Panc1 (cell line): ENCODE measurements at regions of chr2 and their contacts with region 1.

Region 1: GRCh38 chr2:46887028-46887885 is 28.3 kb downstream of the MCFD2 start:
- DNase-seq: no peak
- ATAC-seq: no peak
- H3K4me3 ChIP-seq: no peak overlapping the region
- H3K27ac ChIP-seq: no peak overlapping the region
- H3K4me1 ChIP-seq: peaks cover 2% of the 10 kb centered on the region; the same call in 1 of the 2 replicates
- H3K27me3 ChIP-seq: no peaks in the 10 kb centered on the region
- CTCF ChIP-seq: no peak

Region 2: GRCh38 chr2:46632349-46632748 is 254.9 kb before region 1 on chr2:
- CTCF ChIA-PET with region 1: no interaction called
- POLR2A ChIA-PET with region 1: no interaction called
- in situ Hi-C with region 1: no loop called
- intact Hi-C with region 1: loop called (anchors 2 kb)
- DNase-seq: no peak
- ATAC-seq: peak; percentile 73
- H3K4me3 ChIP-seq: no peak overlapping the region
- H3K27ac ChIP-seq: no peak overlapping the region
- H3K4me1 ChIP-seq: no peaks in the 10 kb centered on the region
- H3K27me3 ChIP-seq: no peaks in the 10 kb centered on the region
- CTCF ChIP-seq: peak; percentile 66; the same call in 1 of the 2 replicates

Region 3: DNA sequence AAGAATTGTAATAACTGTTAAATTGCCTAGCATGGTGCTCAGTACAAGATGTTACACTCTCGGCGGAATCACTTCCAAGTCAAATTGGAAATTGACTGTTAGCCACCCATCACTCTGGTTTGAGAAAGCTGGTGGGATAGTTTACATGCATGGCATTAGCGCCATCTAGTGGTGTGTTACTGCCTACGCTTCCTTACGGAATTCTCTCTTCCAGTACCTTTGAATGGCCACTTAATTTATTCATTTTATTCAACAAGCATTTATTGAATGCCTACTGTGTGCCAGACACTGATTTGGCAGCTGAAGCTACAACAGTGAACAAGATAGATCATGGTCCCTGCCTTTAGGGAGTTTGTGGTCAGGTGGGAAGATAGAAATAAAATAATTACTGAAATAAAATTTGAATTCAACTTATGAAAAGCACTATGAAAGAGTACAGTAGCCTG is 236.7 kb before region 1 on chr2:
- CTCF ChIA-PET with region 1: interaction called, 5 read pairs
- POLR2A ChIA-PET with region 1: no interaction called
- in situ Hi-C with region 1: no loop called
- intact Hi-C with region 1: loop called (anchors 5 kb)
- DNase-seq: peak; percentile 75
- ATAC-seq: peak; percentile 90
- H3K4me3 ChIP-seq: no peak overlapping the region
- H3K27ac ChIP-seq: no peak overlapping the region
- H3K4me1 ChIP-seq: no peaks in the 10 kb centered on the region
- H3K27me3 ChIP-seq: no peaks in the 10 kb centered on the region
- CTCF ChIP-seq: peak; percentile 92

Region 4: DNA sequence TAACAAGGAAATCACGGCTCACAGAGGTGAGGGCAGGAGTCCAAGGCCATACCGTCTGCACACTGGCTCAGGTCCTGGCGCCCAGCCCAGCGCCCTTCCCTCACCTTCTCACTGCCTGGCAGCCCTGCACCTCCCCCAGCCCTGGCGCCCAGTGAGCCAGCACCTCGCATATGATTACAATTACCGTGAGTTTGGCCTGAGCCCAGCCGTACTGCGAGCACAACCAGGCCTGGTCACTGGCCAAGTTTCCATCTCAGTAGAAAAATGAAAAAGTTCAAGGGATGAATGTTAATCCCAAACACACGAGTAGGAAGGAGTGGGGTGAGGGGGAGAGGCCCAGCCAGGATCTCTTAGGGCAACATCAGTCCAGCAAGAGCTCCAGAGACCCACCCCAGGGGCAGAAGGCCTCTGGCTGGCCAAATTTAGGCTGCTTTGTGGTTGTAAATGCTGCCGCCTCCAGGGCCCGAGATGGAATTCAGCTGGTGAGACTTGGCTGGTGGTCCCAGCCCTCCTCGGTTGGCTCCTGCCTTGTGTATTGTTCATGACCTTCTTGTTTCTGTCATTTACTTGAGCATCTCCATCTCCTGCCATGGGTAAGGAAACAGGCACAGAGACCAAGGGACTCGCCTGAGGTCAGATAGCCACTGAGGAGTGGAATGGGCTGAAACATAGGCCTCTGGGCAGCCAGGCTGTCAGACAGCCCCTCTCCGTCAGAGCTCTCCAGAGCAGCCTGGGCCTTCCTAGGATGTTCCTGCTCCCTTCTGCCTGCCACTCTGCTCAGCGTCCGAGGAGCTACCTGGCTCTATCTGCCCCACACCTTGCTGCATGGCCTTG is 39.8 kb before region 1 on chr2:
- CTCF ChIA-PET with region 1: no interaction called
- POLR2A ChIA-PET with region 1: no interaction called
- in situ Hi-C with region 1: no loop called
- intact Hi-C with region 1: no loop called
- DNase-seq: no peak
- ATAC-seq: peak; percentile 46
- H3K4me3 ChIP-seq: no peak overlapping the region
- H3K27ac ChIP-seq: peak overlapping the region; percentile 62; the same call in 1 of the 2 replicates
- H3K4me1 ChIP-seq: peaks cover 51% of the 10 kb centered on the region
- H3K27me3 ChIP-seq: no peaks in the 10 kb centered on the region
- CTCF ChIP-seq: no peak

Region 5: GRCh38 chr2:46873375-46874032 is 13.8 kb before region 1 on chr2:
- CTCF ChIA-PET with region 1: no interaction called
- POLR2A ChIA-PET with region 1: no interaction called
- in situ Hi-C with region 1: no loop called
- intact Hi-C with region 1: no loop called
- DNase-seq: peak; percentile 89
- ATAC-seq: peak; percentile 97
- H3K4me3 ChIP-seq: no peak overlapping the region
- H3K27ac ChIP-seq: peak overlapping the region; percentile 78
- H3K4me1 ChIP-seq: peaks cover 25% of the 10 kb centered on the region
- H3K27me3 ChIP-seq: no peaks in the 10 kb centered on the region
- CTCF ChIP-seq: no peak